ENCODE measurements at regions of chr1 and their contacts with region 1.

Region 1: DNA sequence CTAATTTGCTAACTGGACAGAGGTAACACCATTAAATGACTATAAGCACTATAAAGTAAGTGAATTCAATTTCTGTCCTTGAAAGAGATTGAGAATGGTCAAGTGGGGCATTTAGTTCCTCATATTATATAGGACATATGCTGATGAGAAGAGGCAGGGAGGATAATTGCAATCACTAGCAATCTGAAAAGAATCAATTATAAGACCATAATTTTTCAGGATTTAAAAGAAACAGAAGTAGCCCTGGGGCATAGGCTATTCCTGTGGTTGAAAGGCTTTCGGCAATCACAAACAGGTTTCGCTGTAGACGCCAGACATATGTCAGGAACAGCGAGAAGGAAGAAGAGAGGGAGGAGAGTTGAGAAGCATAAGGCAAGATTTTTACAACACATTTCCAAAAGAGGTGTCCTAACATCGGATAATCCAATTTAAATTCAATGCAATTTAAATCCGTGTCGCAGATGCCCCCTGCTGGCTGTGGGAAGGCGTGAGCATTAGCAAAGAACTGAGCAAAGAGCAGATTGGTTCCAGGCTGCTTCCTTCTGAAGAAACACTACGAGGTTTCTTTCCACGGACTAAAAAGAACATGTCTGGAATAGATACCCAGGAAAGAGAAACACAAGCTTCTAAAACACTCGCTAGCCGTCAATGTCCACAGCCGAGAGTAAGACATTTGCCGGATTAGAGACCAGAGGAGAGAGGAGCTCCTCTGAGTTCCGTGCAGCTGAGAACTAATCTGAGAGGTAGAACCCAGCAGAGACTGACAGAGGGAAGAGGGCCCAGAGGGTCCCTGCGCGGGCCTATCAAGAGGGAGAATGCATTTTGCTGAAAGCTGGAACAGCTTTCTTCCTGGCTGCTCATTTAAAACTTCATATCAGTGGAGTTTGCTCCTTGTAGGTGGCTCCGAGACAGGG is 27.9 kb downstream of the RGS5 start:
- DNase-seq: peak; percentile 29
- H3K4me3 ChIP-seq: no peak overlapping the region
- H3K27ac ChIP-seq: no peak overlapping the region
- H3K27me3 ChIP-seq: no peaks in the 10 kb centered on the region
- CTCF ChIP-seq: peak; percentile 94

Region 2: GRCh38 chr1:162854245-162854882 is 320.4 kb before region 1 on chr1:
- CTCF ChIA-PET with region 1: interaction called, 64 read pairs
- POLR2A ChIA-PET with region 1: no interaction called
- DNase-seq: peak; percentile 55
- H3K4me3 ChIP-seq: no peak overlapping the region
- H3K27ac ChIP-seq: no peak overlapping the region
- H3K27me3 ChIP-seq: no peaks in the 10 kb centered on the region
- CTCF ChIP-seq: peak; percentile 87

Region 3: DNA sequence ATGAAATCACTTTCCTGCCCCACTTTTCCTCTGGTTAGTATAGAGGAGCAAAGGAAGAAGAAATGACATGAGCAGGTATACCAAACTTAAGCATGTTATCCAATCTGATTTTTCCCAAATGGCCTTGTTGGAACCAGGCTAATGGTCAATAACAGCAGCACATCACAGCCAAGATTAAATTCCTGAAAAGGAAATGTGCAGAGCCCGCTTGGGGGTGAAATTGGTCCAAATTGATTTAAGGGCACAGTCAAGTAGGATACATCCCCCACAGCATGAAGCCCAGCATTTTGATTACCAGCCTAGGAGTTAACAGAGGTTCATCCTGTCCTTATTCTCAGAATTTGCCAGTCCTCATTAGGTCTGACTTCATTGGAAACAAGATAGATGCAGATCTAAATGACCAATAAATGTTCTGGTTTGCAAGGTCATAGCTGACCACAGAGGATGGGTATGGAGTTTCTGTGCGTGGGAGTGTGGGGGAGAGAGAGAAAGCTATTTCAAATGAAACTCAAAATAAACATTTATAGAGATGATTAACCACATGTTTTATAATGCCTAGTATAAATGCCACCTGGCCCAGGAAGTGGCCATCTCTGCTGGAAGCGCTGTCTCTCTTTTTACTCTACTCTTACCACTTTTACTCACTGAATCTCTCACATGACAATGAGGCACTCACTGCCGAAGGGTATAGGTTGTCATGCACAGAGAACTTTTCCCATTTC is 10.8 kb before region 1 on chr1:
- CTCF ChIA-PET with region 1: interaction called, 45 read pairs
- POLR2A ChIA-PET with region 1: no interaction called
- DNase-seq: peak; percentile 37
- H3K4me3 ChIP-seq: no peak overlapping the region
- H3K27ac ChIP-seq: peak overlapping the region; percentile 24
- H3K27me3 ChIP-seq: no peaks in the 10 kb centered on the region
- CTCF ChIP-seq: no peak

Region 4: GRCh38 chr1:163195728-163196448 is 21.1 kb after region 1 on chr1:
- CTCF ChIA-PET with region 1: interaction called, 16 read pairs
- POLR2A ChIA-PET with region 1: no interaction called
- DNase-seq: no peak
- H3K4me3 ChIP-seq: no peak overlapping the region
- H3K27ac ChIP-seq: no peak overlapping the region
- H3K27me3 ChIP-seq: no peaks in the 10 kb centered on the region
- CTCF ChIP-seq: no peak

Region 5: GRCh38 chr1:163315773-163316374 is 141.1 kb after region 1 on chr1:
- CTCF ChIA-PET with region 1: interaction called, 66 read pairs
- POLR2A ChIA-PET with region 1: no interaction called
- DNase-seq: no peak
- H3K4me3 ChIP-seq: no peak overlapping the region
- H3K27ac ChIP-seq: no peak overlapping the region
- H3K27me3 ChIP-seq: no peaks in the 10 kb centered on the region
- CTCF ChIP-seq: peak; percentile 60

Region 6: DNA sequence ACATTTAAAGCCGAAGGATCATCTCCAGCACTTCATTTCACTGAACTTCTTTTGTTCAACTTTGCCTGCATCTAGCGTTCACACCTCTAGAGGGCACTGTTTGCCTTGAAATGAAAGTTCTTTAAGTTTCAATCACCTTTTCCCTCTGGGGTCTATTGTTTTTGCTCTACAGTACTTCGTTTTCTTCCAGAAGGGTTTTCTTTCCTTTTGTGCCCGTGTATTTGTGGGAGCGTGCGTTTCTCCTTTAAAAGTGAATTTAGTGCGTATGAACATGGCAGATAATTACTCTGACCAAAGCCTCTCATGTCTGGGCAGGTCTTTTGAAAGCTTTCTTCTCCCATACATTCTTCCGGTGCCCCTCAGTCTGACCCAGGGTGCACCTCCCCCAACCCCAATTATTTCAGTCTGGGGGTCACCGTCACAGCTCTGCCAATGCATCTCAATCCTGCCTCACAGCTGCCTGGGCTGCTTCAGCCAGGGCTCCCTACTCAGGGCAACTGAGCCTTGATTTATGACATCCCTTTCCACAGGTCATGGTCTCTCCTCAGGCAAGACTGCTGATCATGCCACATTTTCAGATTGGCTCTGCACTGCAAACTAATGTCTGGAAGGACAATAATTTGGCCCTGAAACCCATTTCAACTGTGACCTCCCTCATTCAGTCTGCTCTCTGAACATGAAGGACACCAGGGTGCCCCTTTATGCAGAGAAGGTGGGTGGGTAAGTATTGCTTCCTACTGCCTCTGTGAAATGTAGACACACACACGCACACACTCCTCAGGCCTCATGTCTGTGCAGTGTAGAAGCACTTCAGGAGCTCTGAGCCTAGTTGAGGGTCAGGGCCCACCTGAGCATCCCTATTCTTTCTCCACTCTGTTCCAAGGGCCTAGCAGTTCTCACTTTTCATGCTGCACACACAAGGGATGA is 235.6 kb after region 1 on chr1:
- CTCF ChIA-PET with region 1: no interaction called
- POLR2A ChIA-PET with region 1: no interaction called
- DNase-seq: peak; percentile 2
- H3K4me3 ChIP-seq: no peak overlapping the region
- H3K27ac ChIP-seq: no peak overlapping the region
- H3K27me3 ChIP-seq: no peaks in the 10 kb centered on the region
- CTCF ChIP-seq: peak; percentile 82

Measured in AG04450 (cell line).